Activated CD4-positive, alpha-beta memory T cell treated with anti-CD3 and anti-CD28 coated beads, Interleukin-2, amount 10 ng/mL, durations not matched to agents 7 days and 5 days (primary cell): ENCODE measurements at regions of chr1 and their contacts with region 1.

Region 1: DNA sequence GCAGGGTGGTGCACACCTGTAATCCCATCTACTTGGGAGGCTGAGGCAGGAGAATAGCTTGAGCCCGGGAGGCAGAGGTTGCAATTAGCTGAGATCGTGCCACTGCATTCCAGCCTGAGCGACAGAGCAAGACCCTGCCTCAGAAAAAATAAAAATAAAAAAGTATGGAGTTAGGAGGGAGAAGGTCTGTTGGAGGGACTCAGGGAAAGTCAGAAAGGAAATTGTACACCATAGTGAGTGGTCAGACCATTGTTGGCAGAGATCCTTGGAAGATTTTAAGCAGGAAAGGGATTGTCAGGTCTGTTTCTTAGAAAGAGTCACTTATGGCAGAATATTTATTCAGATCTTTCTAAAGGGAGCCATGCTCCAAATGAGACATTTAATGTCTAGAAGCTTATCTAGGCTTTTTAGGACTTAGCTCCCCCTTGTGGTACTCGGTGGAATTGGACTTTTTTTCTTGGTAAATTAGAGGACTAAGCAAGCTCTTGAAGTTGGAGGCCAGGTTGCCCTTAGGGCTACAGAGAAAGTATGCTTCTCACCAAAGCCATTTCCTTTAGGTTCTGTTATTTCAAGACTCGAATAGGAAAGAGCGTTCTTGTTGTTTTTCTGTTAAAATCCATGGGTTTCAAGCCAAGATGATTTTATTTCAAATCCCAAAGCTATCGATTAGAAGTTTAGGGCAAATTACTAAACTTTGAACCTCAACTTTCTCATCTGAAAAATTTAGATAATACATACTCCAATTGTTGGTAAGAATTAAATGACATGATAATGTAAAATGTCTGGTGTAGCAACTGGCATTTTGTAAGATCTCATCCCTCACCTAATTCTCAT is 16.5 kb downstream of the MIA3 start:
- DNase-seq: peak; percentile 62
- H3K4me3 Mint-ChIP-seq: no peak overlapping the region
- H3K27ac Mint-ChIP-seq: no peak overlapping the region
- H3K4me1 Mint-ChIP-seq: peaks cover 7% of the 10 kb centered on the region
- H3K27me3 Mint-ChIP-seq: no peaks in the 10 kb centered on the region

Region 2: DNA sequence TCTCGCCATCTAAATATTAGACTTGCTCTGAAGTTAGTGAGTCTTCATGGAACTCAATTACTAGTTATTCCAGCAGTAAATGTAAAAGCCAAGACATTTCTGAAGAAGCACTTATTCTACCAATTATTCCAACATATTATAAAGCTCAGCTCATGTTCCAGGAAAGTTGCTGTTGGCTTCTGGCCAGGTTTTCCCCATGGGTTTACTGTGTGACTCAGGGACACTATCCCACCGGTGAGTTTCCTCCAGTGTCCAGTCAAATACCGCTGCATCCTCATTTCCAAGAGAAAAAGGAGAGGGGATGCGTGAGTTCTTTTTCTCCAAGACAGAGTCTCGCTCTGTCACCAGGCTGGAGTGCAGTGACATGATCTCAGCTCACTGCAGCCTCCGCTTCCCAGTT is 77.2 kb before region 1 on chr1:
- CTCF ChIA-PET with region 1: interaction called, 10 read pairs
- POLR2A ChIA-PET with region 1: interaction called, 3 read pairs
- DNase-seq: no peak
- H3K4me3 Mint-ChIP-seq: no peak overlapping the region
- H3K27ac Mint-ChIP-seq: no peak overlapping the region
- H3K4me1 Mint-ChIP-seq: no peaks in the 10 kb centered on the region
- H3K27me3 Mint-ChIP-seq: no peaks in the 10 kb centered on the region

Region 3: DNA sequence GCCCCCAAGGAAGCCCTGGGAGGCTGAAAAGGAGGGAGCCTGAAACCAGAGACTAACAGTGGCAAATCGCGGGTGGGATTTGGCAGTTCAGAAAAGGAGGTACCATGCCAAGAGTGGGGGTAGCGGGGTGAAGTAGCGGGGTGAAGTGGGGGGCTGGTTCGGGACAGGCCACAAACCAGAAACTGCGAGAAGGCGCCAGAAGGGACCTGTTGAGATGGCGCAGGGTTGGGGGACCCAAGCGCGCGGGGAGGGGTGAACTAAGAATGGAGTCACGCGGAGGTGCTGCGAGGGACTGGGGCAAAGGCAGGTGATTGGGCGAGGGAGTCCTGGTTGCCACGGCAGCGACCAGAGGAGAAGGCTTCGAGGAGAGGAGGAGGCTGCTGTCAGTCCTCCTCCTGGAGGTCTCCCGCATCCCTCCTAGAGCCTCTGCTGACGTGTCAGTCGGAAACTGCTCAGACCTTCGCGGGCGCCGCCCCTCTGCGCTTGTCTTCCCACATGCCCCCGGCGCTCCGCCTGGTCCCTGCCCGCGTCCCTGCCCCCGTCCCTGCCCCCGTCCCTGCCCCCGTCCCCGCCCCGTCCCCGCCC is 16.9 kb before region 1 on chr1:
- CTCF ChIA-PET with region 1: interaction called, 34 read pairs
- POLR2A ChIA-PET with region 1: interaction called, 11 read pairs
- DNase-seq: peak; percentile 92
- H3K4me3 Mint-ChIP-seq: peak overlapping the region; percentile 77
- H3K27ac Mint-ChIP-seq: peak overlapping the region; percentile 67
- H3K4me1 Mint-ChIP-seq: peaks cover 24% of the 10 kb centered on the region
- H3K27me3 Mint-ChIP-seq: peaks cover 30% of the 10 kb centered on the region

Region 4: GRCh38 chr1:222654849-222655248 is 20.5 kb after region 1 on chr1:
- CTCF ChIA-PET with region 1: interaction called, 18 read pairs
- POLR2A ChIA-PET with region 1: interaction called, 3 read pairs
- DNase-seq: peak; percentile 74
- H3K4me3 Mint-ChIP-seq: no peak overlapping the region
- H3K27ac Mint-ChIP-seq: peak overlapping the region; percentile 73
- H3K4me1 Mint-ChIP-seq: peaks cover 56% of the 10 kb centered on the region
- H3K27me3 Mint-ChIP-seq: no peaks in the 10 kb centered on the region

Region 5: DNA sequence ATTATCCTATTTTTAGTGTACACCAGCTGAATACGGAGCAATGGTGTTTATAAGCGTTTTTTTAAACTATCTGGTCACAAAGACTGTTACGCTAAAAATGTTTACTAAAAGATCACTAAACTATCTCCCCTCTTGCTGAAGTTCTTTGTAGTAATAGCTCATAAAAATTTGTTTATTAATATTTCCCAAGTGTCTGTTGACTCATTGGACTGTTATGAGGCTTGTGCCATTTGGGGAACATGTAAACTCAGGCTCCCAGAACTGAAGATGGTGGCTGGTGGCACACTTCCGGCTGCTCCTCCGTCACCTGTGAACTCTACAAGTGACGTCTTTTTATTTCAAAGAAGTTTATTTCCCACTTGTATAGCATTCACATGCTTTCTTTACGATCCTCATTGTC is 31.6 kb after region 1 on chr1:
- CTCF ChIA-PET with region 1: no interaction called
- POLR2A ChIA-PET with region 1: no interaction called
- DNase-seq: no peak
- H3K4me3 Mint-ChIP-seq: no peak overlapping the region
- H3K27ac Mint-ChIP-seq: no peak overlapping the region
- H3K4me1 Mint-ChIP-seq: peaks cover 7% of the 10 kb centered on the region
- H3K27me3 Mint-ChIP-seq: no peaks in the 10 kb centered on the region